Left cardiac atrium (tissue), 4 donors: ENCODE measurements at regions of chr17 and their contacts with region 1.

Region 1: GRCh38 chr17:50547035-50547735 is at the start of gene SPATA20:
- DNase-seq: peak; percentile 93
- ATAC-seq: peak; percentile 90
- total RNA-seq, gene SPATA20: 41.0 to 41.1 TPM

Region 2: GRCh38 chr17:50478391-50479381 is 68.5 kb before region 1 on chr17 and contains the start of gene RSAD1:
- intact Hi-C with region 1: loop called in 1 of 2 experiments (anchors 10 kb)
- DNase-seq: peak; percentile 91
- ATAC-seq: peak; percentile 90 to 91
- total RNA-seq, gene RSAD1: 31.6 to 38.8 TPM

Region 3: DNA sequence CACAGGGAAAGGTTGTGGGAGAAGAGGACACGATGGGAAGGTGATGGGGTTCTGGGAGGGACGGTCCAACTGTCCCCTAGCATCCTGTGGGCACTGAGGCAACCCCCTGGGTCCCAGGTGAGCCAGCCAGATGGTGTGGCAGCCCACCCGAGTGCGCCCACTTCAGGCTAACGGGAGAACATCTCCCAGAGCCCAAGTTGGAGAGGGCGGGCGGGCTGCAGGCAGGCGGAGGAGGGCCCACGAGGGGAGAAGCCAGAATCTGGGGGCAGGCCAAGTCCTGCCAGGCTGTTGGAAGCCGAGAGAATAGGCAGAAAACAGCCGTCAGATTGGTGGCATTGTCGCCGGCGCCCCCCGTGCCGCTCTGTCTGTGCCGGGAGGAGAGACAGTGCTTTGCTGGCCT is 73.7 kb after region 1 on chr17:
- intact Hi-C with region 1: loop called (anchors 1 to 5 kb)
- DNase-seq: no peak
- ATAC-seq: no peak

Region 4: DNA sequence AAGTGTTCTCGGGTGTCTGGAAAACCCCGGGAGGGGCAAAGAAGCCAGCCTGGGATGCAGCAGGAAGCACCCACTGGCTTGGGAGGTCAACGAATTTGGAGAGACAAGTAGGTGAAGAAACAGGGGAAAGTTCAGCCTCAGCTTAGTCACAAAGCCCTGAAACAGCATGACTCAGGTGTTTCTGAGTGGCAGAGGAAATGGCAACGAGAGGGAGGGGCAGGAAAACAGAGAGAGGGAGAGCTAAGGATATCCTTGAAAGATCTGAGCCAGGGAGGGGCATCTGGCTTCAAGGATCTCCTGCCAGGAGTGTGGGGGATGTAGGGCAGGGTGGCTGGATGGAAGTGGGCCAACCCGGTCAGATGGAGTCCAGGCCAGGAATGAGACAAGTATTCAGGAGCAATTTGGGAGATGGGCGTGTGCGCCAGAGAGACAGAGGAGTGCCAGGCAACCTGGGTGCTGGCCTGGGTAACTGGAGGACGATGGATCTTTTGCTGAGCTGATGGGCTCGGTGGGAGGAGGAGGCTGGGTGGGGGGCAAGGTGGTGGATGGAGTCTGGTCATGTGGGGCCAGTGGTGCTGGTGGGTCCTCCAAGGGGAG is 114.7 kb after region 1 on chr17:
- intact Hi-C with region 1: no loop called
- DNase-seq: peak; percentile 62
- ATAC-seq: peak; percentile 25 to 70

Region 5: DNA sequence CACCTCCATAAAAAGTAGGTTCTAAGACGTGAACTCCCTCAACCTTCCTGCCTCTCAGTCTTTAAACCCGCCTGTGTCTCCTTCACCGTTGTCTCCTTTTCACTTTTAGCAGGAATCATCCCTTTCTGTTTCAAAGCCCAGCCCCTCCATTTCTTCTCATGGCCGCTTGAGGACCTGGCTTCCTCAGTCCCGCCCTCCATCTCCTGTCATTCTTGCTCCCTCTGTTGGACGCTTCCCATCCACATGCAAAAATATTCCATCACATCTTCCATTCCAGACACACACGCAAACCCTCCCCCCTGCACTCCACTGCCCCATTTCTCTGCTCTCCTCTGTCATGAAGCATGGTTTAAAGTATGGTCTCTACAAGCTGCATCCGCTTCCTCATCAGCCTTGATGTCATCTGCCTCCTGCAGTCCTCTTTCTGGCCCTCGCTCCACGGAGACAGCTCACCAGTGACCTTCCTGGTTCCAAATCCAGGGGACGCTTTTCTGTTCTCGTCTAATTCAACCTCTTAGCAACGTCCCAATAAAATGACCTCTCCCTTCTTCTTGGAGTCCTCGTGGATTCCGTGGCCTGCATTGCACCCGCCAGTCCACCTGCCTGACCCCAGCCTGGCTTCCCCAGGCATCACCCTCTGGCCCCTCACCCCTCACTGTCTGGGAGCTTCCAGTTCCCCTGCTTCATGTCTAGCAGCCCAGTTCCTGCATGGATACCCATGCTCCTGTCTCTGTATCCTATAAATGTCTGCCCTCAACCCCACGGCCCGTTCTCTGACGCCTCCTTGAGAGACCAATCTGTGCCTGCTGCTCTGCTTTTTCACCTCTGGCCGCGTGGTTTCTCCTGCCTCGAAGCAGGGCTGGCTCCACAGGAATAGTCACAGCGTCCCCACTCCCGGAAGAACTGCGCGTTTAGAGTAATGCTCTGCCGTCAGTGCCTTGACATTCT is 134.4 kb after region 1 on chr17:
- intact Hi-C with region 1: loop called (anchors 5 kb)
- DNase-seq: peak; percentile 58
- ATAC-seq: peak; percentile 75 to 79

Region 6: DNA sequence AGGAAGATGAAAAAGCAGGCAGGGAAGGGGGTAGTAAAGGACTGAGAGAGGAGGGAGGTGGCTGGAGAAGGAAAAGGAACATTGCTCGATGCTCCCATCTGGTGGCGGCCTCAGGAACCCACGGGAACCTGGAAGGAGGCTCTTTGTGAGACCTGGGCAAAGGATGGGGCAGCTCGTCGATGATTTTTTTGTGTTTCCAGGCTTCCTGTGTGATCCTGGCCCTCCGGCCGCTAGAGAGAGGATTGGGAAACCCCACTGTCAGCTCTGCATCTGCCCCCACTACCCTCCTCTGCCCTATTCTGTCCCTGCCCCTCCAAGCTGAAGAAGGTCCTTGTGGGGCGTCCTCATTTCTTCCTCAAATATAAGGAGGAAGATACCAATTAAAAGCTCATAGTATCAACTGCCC is 294.8 kb after region 1 on chr17:
- intact Hi-C with region 1: loop called (anchors 5 to 10 kb)
- DNase-seq: peak; percentile 68
- ATAC-seq: peak; percentile 65 to 77